Astrocyte of the cerebellum (primary cell): ENCODE measurements at regions of chr6 and their contacts with region 1.

Region 1: DNA sequence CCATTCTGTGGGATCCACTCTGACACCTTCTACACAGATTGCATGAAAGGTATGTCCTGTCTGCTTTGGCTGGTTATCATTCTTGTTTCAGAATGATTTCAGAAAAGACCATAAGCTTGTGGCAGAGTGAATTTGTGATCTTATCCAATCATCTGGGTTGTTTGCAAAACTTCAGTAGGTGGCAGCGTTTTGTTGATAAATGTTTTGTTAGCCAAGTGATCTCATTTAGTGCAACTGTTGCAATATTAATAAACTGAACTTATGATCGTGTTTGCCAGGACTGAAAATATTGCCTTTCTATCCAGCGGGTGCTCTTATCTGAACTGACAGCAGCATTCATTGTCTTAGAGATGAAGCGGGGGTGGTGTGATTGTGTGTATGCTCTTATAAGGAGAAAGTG is 613.2 kb upstream of the NOX3 start:
- DNase-seq: no peak
- H3K4me3 ChIP-seq: no peak overlapping the region
- CTCF ChIP-seq: no peak

Region 2: GRCh38 chr6:156126535-156126934 is 57.7 kb after region 1 on chr6:
- in situ Hi-C with region 1: loop called (anchors 10 kb)
- DNase-seq: no peak
- H3K4me3 ChIP-seq: no peak overlapping the region
- CTCF ChIP-seq: no peak

Region 3: GRCh38 chr6:156154896-156155295 is 86.0 kb after region 1 on chr6:
- in situ Hi-C with region 1: no loop called
- DNase-seq: no peak
- H3K4me3 ChIP-seq: no peak overlapping the region
- CTCF ChIP-seq: no peak